ENCODE measurements at regions of chr12 and their contacts with region 1.

Region 1: GRCh38 chr12:60119285-60119853 is 523.5 kb downstream of the SLC16A7 start:
- DNase-seq: no peak
- H3K4me3 ChIP-seq: no peak overlapping the region
- H3K27ac ChIP-seq: no peak overlapping the region
- H3K4me1 ChIP-seq: no peaks in the 10 kb centered on the region
- H3K27me3 ChIP-seq: no peaks in the 10 kb centered on the region
- CTCF ChIP-seq: no peak
- POLR2A ChIP-seq: no peak

Region 2: GRCh38 chr12:60078026-60078425 is 41.3 kb before region 1 on chr12:
- CTCF ChIA-PET with region 1: no interaction called
- POLR2A ChIA-PET with region 1: no interaction called
- dilution Hi-C with region 1: no loop called
- intact Hi-C with region 1: no loop called
- DNase-seq: no peak
- H3K4me3 ChIP-seq: no peak overlapping the region
- H3K27ac ChIP-seq: no peak overlapping the region
- H3K4me1 ChIP-seq: peaks cover 14% of the 10 kb centered on the region
- H3K27me3 ChIP-seq: no peaks in the 10 kb centered on the region
- CTCF ChIP-seq: no peak
- POLR2A ChIP-seq: no peak

Region 3: GRCh38 chr12:60137513-60137912 is 18.1 kb after region 1 on chr12:
- CTCF ChIA-PET with region 1: interaction called, 14 read pairs
- POLR2A ChIA-PET with region 1: no interaction called
- dilution Hi-C with region 1: no loop called
- intact Hi-C with region 1: no loop called
- DNase-seq: no peak
- H3K4me3 ChIP-seq: no peak overlapping the region
- H3K27ac ChIP-seq: no peak overlapping the region
- H3K4me1 ChIP-seq: no peaks in the 10 kb centered on the region
- H3K27me3 ChIP-seq: no peaks in the 10 kb centered on the region
- CTCF ChIP-seq: no peak
- POLR2A ChIP-seq: no peak